Activated naive CD8-positive, alpha-beta T cell treated with anti-CD3 and anti-CD28 coated beads, Interleukin-2, amount 10 ng/mL, durations not matched to agents 7 days and 5 days (primary cell): ENCODE measurements at regions of chr2 and their contacts with region 1.

Region 1: GRCh38 chr2:84881581-84882414 is 914 bp upstream of the TRABD2A start:
- DNase-seq: peak; percentile 84
- ATAC-seq: peak; percentile 63
- H3K4me3 Mint-ChIP-seq: peak overlapping the region; percentile 93
- H3K27ac Mint-ChIP-seq: peak overlapping the region; percentile 97
- H3K4me1 Mint-ChIP-seq: peaks cover 49% of the 10 kb centered on the region
- H3K27me3 Mint-ChIP-seq: no peaks in the 10 kb centered on the region

Region 2: GRCh38 chr2:84735389-84735788 is 146.4 kb before region 1 on chr2:
- POLR2A ChIA-PET with region 1: no interaction called
- DNase-seq: no peak
- ATAC-seq: no peak
- H3K4me3 Mint-ChIP-seq: no peak overlapping the region
- H3K27ac Mint-ChIP-seq: no peak overlapping the region
- H3K4me1 Mint-ChIP-seq: peaks cover 9% of the 10 kb centered on the region
- H3K27me3 Mint-ChIP-seq: no peaks in the 10 kb centered on the region

Region 3: GRCh38 chr2:84776011-84776410 is 105.8 kb before region 1 on chr2:
- POLR2A ChIA-PET with region 1: no interaction called
- DNase-seq: no peak
- ATAC-seq: no peak
- H3K4me3 Mint-ChIP-seq: no peak overlapping the region
- H3K27ac Mint-ChIP-seq: no peak overlapping the region
- H3K4me1 Mint-ChIP-seq: peaks cover 21% of the 10 kb centered on the region
- H3K27me3 Mint-ChIP-seq: no peaks in the 10 kb centered on the region

Region 4: DNA sequence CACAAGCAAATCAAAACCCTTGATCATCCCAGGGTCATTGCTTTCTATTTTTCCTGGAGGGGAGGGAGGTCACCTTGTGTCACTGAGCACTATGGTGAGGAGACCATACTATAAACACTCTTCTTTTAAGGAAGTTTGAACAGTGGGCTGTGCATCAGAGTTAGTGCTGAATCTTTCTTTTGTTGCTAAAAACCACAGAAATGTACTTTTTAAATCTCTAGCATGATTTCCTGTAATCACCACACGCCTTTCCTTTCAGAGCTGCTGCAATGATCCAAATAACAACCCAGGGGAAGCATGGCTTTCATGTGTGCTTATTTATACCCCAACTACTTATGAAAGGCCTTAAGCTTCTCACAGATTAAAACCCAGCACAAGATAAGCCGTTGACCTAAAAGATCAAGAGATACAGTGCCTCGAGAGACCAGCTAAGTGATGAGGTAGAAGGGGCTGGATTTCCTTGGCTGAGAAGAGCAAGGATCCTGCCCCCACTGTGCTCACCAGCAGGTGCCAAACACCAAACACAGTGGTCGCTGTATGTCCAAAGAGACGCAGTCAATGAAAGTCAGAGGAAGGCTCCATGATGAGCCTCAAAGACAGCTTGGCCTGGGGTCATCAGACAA is 35.6 kb before region 1 on chr2:
- POLR2A ChIA-PET with region 1: interaction called, 27 read pairs
- DNase-seq: no peak
- ATAC-seq: peak; percentile 78
- H3K4me3 Mint-ChIP-seq: peak overlapping the region; percentile 69
- H3K27ac Mint-ChIP-seq: peak overlapping the region; percentile 93
- H3K4me1 Mint-ChIP-seq: peaks cover 84% of the 10 kb centered on the region
- H3K27me3 Mint-ChIP-seq: no peaks in the 10 kb centered on the region

Region 5: GRCh38 chr2:84856787-84857186 is 25.0 kb before region 1 on chr2:
- POLR2A ChIA-PET with region 1: interaction called, 27 read pairs
- DNase-seq: no peak
- ATAC-seq: peak; percentile 69
- H3K4me3 Mint-ChIP-seq: peak overlapping the region; percentile 82
- H3K27ac Mint-ChIP-seq: peak overlapping the region; percentile 97
- H3K4me1 Mint-ChIP-seq: peaks cover 80% of the 10 kb centered on the region
- H3K27me3 Mint-ChIP-seq: no peaks in the 10 kb centered on the region

Region 6: GRCh38 chr2:84919885-84920580 is 38.2 kb after region 1 on chr2:
- POLR2A ChIA-PET with region 1: interaction called, 66 read pairs
- DNase-seq: no peak
- ATAC-seq: peak; percentile 57
- H3K4me3 Mint-ChIP-seq: peak overlapping the region; percentile 76
- H3K27ac Mint-ChIP-seq: peak overlapping the region; percentile 81
- H3K4me1 Mint-ChIP-seq: peaks cover 39% of the 10 kb centered on the region
- H3K27me3 Mint-ChIP-seq: no peaks in the 10 kb centered on the region

Region 7: DNA sequence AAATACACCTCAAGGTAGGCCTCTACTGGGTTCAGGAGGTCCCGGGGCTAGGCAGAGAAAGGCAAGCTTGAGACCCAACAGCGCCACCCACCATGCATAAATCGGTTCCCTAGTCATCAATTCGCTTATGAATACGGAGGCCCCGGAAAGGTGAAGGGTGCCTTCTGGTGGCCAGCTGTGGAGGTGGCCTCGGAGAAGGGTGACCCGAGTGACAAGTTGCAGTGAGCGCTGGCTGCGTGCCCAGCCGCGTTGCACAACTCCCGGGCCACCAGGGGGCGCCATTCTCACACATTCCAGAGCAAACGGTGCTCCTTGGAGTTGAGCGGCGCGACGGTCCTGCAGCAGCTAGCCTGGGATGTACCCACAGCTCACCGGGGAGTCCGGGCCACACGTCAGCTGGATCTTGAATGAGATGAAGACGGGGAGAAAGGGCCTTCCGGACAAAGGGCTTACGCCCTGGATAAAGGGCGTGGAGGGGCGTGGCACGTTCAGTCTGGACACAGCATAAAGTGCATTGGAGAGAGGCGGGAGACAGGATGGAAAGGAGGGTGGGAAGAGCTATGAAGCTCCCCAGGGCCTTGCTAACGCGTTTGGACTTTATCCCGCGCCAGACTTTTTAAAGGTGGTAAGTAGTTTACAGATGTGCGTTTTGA is 44.1 kb after region 1 on chr2:
- POLR2A ChIA-PET with region 1: interaction called, 66 read pairs
- DNase-seq: peak; percentile 99
- ATAC-seq: peak; percentile 88
- H3K4me3 Mint-ChIP-seq: peak overlapping the region; percentile 96
- H3K27ac Mint-ChIP-seq: peak overlapping the region; percentile 85
- H3K4me1 Mint-ChIP-seq: peaks cover 27% of the 10 kb centered on the region
- H3K27me3 Mint-ChIP-seq: no peaks in the 10 kb centered on the region

Region 8: GRCh38 chr2:84939426-84940087 is 57.8 kb after region 1 on chr2:
- POLR2A ChIA-PET with region 1: interaction called, 22 read pairs
- DNase-seq: peak; percentile 70
- ATAC-seq: peak; percentile 93
- H3K4me3 Mint-ChIP-seq: peak overlapping the region; percentile 87
- H3K27ac Mint-ChIP-seq: peak overlapping the region; percentile 99
- H3K4me1 Mint-ChIP-seq: peaks cover 37% of the 10 kb centered on the region
- H3K27me3 Mint-ChIP-seq: no peaks in the 10 kb centered on the region

Region 9: DNA sequence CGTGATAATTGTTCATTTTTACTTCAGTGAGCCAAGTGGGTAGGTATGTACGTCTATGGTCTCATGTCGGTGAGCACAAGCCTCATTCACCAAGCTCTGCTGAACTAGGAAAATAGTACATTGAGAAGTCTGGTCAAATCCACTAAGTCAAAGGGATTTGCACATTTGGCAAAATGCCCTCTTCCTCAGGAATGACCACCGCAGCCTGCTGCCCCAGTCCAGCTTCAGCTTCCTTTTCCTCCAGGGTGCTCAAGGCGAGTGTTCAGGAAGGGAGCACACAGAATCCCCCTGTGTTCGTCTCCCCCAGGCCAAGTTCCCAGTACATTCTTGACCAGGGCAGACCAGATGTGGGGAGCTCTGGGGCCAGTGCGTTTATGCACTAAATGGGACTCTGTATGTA is 274.4 kb after region 1 on chr2:
- POLR2A ChIA-PET with region 1: no interaction called
- DNase-seq: no peak
- ATAC-seq: no peak
- H3K4me3 Mint-ChIP-seq: no peak overlapping the region
- H3K27ac Mint-ChIP-seq: no peak overlapping the region
- H3K4me1 Mint-ChIP-seq: no peaks in the 10 kb centered on the region
- H3K27me3 Mint-ChIP-seq: peaks cover 5% of the 10 kb centered on the region